AG04449 (cell line): ENCODE measurements at regions of chr21 and their contacts with region 1.

Region 1: GRCh38 chr21:36141513-36141925 is 6.6 kb downstream of the CBR3 start:
- DNase-seq: no peak
- H3K4me3 ChIP-seq: no peak overlapping the region
- CTCF ChIP-seq: peak; percentile 76

Region 2: DNA sequence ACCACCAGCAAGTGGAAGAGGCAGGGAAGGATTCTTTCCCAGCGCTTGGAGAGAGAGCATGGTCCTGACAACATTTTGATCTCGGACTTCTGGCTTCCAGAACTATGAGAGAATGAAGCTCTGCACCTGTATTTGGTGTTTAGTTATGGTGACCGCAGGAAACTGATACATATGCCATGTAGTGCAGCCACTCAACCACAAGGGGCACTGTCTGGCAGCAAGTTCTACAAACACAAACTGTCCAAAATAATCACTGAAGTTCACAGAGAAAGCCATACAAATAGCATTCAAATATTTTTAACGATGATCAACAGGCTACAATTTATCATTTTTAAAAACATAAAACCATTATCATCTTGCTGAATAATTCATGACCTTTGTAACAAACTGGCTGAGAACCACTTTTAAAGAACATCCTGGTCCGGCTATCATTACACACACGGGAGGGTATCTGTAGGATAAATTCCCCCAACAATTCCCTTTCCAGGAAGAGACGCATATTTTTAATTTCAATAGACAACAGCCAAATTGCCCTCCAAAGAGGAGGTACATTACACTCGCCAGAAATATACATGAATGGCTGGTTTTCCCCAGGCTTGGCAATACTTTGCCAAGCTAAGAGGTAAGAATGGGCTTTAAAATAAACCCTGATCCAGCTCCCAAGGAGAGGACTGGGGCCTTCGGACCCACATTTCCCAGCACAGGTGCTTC is 15.9 kb before region 1 on chr21:
- CTCF ChIA-PET with region 1: interaction called, 17 read pairs
- POLR2A ChIA-PET with region 1: no interaction called
- DNase-seq: no peak
- H3K4me3 ChIP-seq: no peak overlapping the region
- CTCF ChIP-seq: peak; percentile 84

Region 3: GRCh38 chr21:36156339-36156814 is 14.9 kb after region 1 on chr21:
- CTCF ChIA-PET with region 1: interaction called, 71 read pairs
- POLR2A ChIA-PET with region 1: no interaction called
- DNase-seq: peak; percentile 91
- H3K4me3 ChIP-seq: peak overlapping the region; percentile 85
- CTCF ChIP-seq: no peak

Region 4: GRCh38 chr21:36209626-36210171 is 68.2 kb after region 1 on chr21:
- CTCF ChIA-PET with region 1: interaction called, 99 read pairs
- POLR2A ChIA-PET with region 1: no interaction called
- DNase-seq: no peak
- H3K4me3 ChIP-seq: no peak overlapping the region
- CTCF ChIP-seq: peak; percentile 48

Region 5: DNA sequence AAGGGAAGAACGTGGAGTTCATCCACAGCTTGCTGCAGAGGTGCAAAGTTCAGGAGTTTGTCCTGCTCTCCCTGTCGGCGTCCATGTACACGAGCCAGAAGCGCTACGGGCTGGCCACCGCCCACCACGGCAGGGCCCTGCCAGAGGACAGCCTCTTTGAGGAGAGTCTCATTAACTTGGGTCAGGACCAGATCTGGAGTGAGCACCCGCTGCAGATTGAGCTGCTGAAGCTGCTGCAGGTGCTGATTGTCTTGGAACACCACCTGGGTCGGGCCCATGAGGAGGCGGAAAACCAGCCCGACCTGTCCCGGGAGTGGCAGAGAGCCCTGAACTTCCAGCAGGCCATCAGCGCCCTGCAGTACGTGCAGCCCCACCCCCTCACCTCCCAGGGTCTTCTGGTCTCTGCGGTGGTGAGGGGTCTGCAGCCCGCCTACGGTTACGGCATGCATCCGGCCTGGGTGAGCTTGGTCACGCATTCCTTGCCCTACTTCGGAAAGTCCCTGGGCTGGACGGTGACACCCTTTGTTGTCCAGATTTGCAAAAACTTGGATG is 104.6 kb after region 1 on chr21:
- CTCF ChIA-PET with region 1: interaction called, 16 read pairs
- POLR2A ChIA-PET with region 1: no interaction called
- DNase-seq: no peak
- H3K4me3 ChIP-seq: no peak overlapping the region
- CTCF ChIP-seq: no peak

Region 6: GRCh38 chr21:36310016-36310415 is 168.5 kb after region 1 on chr21:
- CTCF ChIA-PET with region 1: no interaction called
- POLR2A ChIA-PET with region 1: no interaction called
- DNase-seq: no peak
- H3K4me3 ChIP-seq: no peak overlapping the region
- CTCF ChIP-seq: no peak

Region 7: DNA sequence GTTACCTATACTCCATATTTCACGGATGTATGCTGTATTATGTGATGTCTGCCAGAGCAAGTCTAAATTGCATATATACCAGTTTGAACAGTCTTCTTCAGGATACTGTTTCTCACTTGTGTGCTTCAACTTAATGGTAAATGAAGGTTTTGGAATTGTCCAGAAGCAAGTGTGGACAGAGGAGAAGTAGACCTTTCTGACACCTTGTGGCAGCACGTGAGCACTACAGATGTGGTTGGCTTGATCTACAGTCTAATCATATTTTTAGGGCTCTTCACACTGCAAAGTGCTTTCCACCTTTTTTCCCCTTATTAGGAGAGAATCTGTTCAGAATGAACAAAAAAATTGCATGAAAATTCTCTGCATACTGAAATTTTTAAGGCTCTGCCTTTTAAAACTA is 189.4 kb after region 1 on chr21:
- CTCF ChIA-PET with region 1: interaction called, 26 read pairs
- POLR2A ChIA-PET with region 1: no interaction called
- DNase-seq: no peak
- H3K4me3 ChIP-seq: no peak overlapping the region
- CTCF ChIP-seq: peak; percentile 73